Activated B cell treated with CpG ODN at 0.5 μM for 24 hours (primary cell): ENCODE measurements at regions of chr5 and their contacts with region 1.

Region 1: GRCh38 chr5:43105369-43106289 is 15.1 kb upstream of the ZNF131 start:
- DNase-seq: peak; percentile 73
- ATAC-seq: peak; percentile 99
- H3K4me3 Mint-ChIP-seq: peak overlapping the region; percentile 83
- H3K27ac Mint-ChIP-seq: peak overlapping the region; percentile 80
- H3K4me1 Mint-ChIP-seq: peaks cover 7% of the 10 kb centered on the region
- H3K27me3 Mint-ChIP-seq: peaks cover 2% of the 10 kb centered on the region
- CTCF ChIP-seq: peak; percentile 100

Region 2: GRCh38 chr5:42956551-42956950 is 149.1 kb before region 1 on chr5:
- CTCF ChIA-PET with region 1: no interaction called
- POLR2A ChIA-PET with region 1: no interaction called
- intact Hi-C with region 1: no loop called
- DNase-seq: no peak
- ATAC-seq: no peak
- H3K4me3 Mint-ChIP-seq: no peak overlapping the region
- H3K27ac Mint-ChIP-seq: no peak overlapping the region
- H3K4me1 Mint-ChIP-seq: peaks cover 11% of the 10 kb centered on the region
- H3K27me3 Mint-ChIP-seq: no peaks in the 10 kb centered on the region
- CTCF ChIP-seq: no peak

Region 3: GRCh38 chr5:42994246-42995151 is 111.1 kb before region 1 on chr5:
- CTCF ChIA-PET with region 1: no interaction called
- POLR2A ChIA-PET with region 1: interaction called, 5 read pairs
- intact Hi-C with region 1: loop called (anchors 1 kb)
- DNase-seq: peak; percentile 72
- ATAC-seq: peak; percentile 66
- H3K4me3 Mint-ChIP-seq: peak overlapping the region; percentile 99
- H3K27ac Mint-ChIP-seq: peak overlapping the region; percentile 100
- H3K4me1 Mint-ChIP-seq: peaks cover 34% of the 10 kb centered on the region
- H3K27me3 Mint-ChIP-seq: peaks cover under 1% of the 10 kb centered on the region
- CTCF ChIP-seq: peak; percentile 89

Region 4: GRCh38 chr5:43066799-43067741 is 38.6 kb before region 1 on chr5:
- CTCF ChIA-PET with region 1: interaction called, 6 read pairs
- POLR2A ChIA-PET with region 1: interaction called, 4 read pairs
- intact Hi-C with region 1: loop called (anchors 1 kb)
- DNase-seq: peak; percentile 83
- ATAC-seq: peak; percentile 55
- H3K4me3 Mint-ChIP-seq: peak overlapping the region; percentile 95
- H3K27ac Mint-ChIP-seq: peak overlapping the region; percentile 99
- H3K4me1 Mint-ChIP-seq: peaks cover 40% of the 10 kb centered on the region
- H3K27me3 Mint-ChIP-seq: no peaks in the 10 kb centered on the region
- CTCF ChIP-seq: no peak

Region 5: GRCh38 chr5:43073597-43074546 is 31.8 kb before region 1 on chr5:
- CTCF ChIA-PET with region 1: interaction called, 5 read pairs
- POLR2A ChIA-PET with region 1: no interaction called
- intact Hi-C with region 1: loop called (anchors 1 kb)
- DNase-seq: no peak
- ATAC-seq: peak; percentile 75
- H3K4me3 Mint-ChIP-seq: no peak overlapping the region
- H3K27ac Mint-ChIP-seq: peak overlapping the region; percentile 38
- H3K4me1 Mint-ChIP-seq: peaks cover 26% of the 10 kb centered on the region
- H3K27me3 Mint-ChIP-seq: no peaks in the 10 kb centered on the region
- CTCF ChIP-seq: no peak

Region 6: DNA sequence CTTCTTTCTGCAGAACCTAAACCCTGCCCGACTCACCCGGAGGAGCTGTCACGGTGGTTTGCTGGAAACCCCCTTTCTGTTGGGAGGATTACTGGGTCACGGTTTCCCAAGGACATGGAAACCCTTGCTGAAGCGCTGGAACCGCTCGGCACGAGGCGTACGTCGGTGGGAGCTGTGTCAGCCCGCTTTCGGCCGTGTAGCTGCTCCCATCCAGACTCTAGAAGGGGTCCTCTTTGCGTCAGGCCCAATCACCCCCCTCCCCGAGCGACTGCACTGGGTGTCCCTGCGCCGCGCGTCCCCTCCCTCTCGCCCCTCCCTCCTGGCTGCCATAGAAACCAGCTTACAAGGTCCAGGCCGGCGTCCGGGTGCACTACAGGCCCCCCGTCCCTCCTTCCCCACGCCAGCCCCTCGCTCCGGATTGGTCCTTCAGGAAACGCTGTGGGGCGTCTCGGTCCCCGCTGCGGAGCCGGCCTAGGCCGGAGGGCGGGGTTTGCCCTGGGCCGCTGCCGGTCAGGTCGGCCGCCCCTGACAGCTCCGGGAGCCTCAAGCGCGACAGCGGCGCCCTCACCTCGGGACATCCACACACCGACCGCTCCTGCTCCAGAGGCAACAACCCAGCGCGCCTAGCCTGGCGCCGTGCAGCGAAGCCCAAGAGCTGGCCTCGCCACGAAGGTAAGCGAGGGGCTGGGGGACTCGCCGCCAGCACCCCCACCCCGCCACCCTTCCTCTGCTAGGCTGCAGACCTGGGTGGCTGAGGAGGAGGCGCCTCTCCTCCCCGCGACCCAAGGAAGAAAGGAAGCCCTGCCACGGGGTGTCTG is 86.3 kb after region 1 on chr5 and contains the start of gene NIM1K:
- CTCF ChIA-PET with region 1: no interaction called
- POLR2A ChIA-PET with region 1: no interaction called
- intact Hi-C with region 1: loop called (anchors 5 kb)
- DNase-seq: peak; percentile 45
- ATAC-seq: peak; percentile 65
- H3K4me3 Mint-ChIP-seq: peak within 1 kb of the TSS; percentile 84
- H3K27ac Mint-ChIP-seq: no peak within 1 kb of the TSS
- H3K4me1 Mint-ChIP-seq: peaks cover 28% of the 10 kb centered on the region
- H3K27me3 Mint-ChIP-seq: peaks cover 19% of the 10 kb centered on the region
- CTCF ChIP-seq: no peak
- total RNA-seq, gene NIM1K: 0.39 and 0.51 TPM in 2 replicates

Region 7: DNA sequence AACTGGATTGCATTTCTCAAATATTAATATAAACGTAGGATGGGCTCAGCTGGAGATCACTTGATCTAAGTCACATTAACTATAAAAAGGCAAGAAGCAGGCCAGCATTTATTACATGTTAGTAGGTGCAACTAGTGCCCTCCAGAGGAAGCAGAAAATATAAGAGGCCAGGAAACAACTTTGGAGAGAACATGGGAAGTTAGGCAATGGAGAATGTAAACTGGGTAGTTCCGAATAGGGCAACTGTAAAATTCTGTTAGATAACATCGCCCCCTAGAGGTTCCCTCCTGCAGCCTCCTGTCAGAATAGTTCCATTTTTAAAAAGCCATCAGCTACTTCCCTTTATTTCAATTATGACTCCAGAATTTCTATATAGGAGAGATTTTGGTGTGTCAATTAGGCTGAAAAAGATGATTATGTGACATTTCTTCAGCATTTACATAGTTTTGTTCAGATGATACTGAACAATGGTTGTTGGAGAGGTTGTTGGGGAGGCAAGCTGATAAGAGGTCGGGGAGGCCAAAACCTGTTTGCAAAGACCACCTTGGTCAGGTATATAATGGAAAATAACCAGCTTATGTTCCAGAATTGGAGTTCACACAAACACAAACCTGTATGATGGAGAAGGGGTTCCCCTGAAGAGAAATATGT is 284.2 kb after region 1 on chr5:
- CTCF ChIA-PET with region 1: interaction called, 8 read pairs
- POLR2A ChIA-PET with region 1: no interaction called
- intact Hi-C with region 1: loop called (anchors 1 kb)
- DNase-seq: no peak
- ATAC-seq: peak; percentile 84
- H3K4me3 Mint-ChIP-seq: no peak overlapping the region
- H3K27ac Mint-ChIP-seq: peak overlapping the region; percentile 30
- H3K4me1 Mint-ChIP-seq: peaks cover 16% of the 10 kb centered on the region
- H3K27me3 Mint-ChIP-seq: no peaks in the 10 kb centered on the region
- CTCF ChIP-seq: peak; percentile 64